ENCODE measurements at regions of chr12 and their contacts with region 1.

Region 1: GRCh38 chr12:50542448-50542847 is 37.7 kb downstream of the DIP2B start:
- DNase-seq: peak; percentile 99
- H3K4me3 ChIP-seq: no peak overlapping the region
- H3K27ac ChIP-seq: peak overlapping the region; percentile 98
- H3K4me1 ChIP-seq: peaks cover 38% of the 10 kb centered on the region
- H3K27me3 ChIP-seq: no peaks in the 10 kb centered on the region
- CTCF ChIP-seq: no peak

Region 2: DNA sequence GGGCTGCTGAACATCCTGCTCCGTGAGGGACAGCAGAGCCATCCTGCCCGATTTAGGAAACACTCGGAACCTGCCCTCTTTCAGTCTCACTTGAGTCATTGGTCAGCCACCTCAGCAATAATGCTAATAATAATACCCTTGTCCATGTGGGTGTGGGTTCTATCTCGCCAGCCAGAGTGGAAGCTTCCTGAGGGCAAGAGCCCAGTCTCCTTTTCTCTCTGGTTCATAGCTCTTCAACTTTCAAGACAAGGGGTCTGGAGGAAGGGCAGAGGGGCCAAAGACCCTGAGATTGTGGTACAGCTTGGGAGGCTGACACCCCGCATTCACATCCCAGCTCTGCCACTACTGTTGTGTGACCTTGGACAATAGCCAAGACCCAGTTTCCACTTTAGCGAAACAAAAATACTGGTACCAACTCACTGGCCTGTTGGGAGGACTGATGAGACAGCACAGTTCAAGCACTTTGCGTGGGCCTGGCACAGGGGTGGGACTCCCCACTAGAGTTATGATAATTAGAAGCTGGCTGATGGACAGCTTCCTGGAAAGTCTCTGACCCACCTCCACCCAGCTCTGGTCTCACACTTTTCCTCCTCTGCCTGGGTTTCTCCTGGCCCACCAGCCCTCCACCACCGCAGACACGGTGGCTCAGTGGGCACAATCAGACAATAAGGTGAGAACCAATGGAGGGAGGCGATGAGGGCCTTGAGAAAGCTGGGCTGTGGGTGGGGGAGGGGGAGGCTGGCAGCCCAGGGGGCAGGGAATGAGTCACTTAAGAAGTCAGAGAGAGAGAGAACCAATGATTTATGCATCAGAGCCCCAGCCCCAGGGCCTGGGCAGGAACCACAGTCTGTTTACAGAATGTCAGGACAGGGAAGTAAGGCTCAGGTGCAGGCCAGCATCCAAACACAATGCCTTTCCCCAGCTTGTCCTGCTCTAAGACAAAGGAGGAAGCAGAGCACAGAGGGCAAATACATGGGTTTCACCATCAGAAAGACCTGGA is 648.4 kb before region 1 on chr12:
- CTCF ChIA-PET with region 1: no interaction called
- dilution Hi-C with region 1: no loop called
- in situ Hi-C with region 1: no loop called
- intact Hi-C with region 1: no loop called
- DNase-seq: peak; percentile 35
- H3K4me3 ChIP-seq: no peak overlapping the region
- H3K27ac ChIP-seq: no peak overlapping the region
- H3K4me1 ChIP-seq: no peaks in the 10 kb centered on the region
- H3K27me3 ChIP-seq: no peaks in the 10 kb centered on the region
- CTCF ChIP-seq: no peak

Region 3: GRCh38 chr12:50482566-50482965 is 59.9 kb before region 1 on chr12:
- CTCF ChIA-PET with region 1: no interaction called
- dilution Hi-C with region 1: no loop called
- in situ Hi-C with region 1: no loop called
- intact Hi-C with region 1: no loop called
- DNase-seq: peak; percentile 22
- H3K4me3 ChIP-seq: no peak overlapping the region
- H3K27ac ChIP-seq: no peak overlapping the region
- H3K4me1 ChIP-seq: no peaks in the 10 kb centered on the region
- H3K27me3 ChIP-seq: no peaks in the 10 kb centered on the region
- CTCF ChIP-seq: no peak

Region 4: GRCh38 chr12:50589650-50590435 is 47.4 kb after region 1 on chr12:
- CTCF ChIA-PET with region 1: no interaction called
- dilution Hi-C with region 1: loop called (anchors 5 kb)
- in situ Hi-C with region 1: no loop called
- intact Hi-C with region 1: no loop called
- DNase-seq: peak; percentile 81
- H3K4me3 ChIP-seq: no peak overlapping the region
- H3K27ac ChIP-seq: peak overlapping the region; percentile 58
- H3K4me1 ChIP-seq: peaks cover 9% of the 10 kb centered on the region
- H3K27me3 ChIP-seq: no peaks in the 10 kb centered on the region
- CTCF ChIP-seq: no peak

Region 5: DNA sequence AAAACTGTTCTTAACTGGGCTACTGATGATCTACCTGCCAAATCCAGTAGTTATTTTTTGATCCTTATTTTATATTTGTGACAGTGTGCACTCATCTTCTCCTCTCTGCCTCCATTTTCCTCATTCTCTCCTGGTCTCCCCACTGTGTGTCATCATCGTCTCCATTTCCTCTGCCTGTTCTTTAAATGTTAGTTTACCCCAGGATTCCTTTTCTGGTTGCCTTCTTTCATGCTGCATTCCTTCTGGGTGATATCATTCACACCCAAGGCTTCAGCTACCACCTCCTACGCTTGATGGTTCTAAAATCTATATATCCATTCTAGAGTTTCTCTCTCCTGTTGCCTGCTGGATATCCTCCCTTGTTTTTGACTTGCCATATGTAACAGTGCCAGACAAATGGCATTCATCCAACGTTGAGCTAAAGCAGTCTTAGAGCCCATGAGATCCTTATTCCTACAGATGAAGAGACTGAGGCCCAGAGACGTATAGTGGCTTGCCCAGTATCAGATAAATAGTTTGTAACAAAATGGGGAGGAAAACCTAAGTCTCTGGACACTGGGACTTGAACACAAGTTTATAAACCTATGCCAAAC is 71.8 kb after region 1 on chr12:
- CTCF ChIA-PET with region 1: no interaction called
- dilution Hi-C with region 1: no loop called
- in situ Hi-C with region 1: no loop called
- intact Hi-C with region 1: loop called (anchors 2 kb)
- DNase-seq: peak; percentile 81
- H3K4me3 ChIP-seq: no peak overlapping the region
- H3K27ac ChIP-seq: peak overlapping the region; percentile 95
- H3K4me1 ChIP-seq: peaks cover 61% of the 10 kb centered on the region
- H3K27me3 ChIP-seq: no peaks in the 10 kb centered on the region
- CTCF ChIP-seq: no peak

Measured in mammary epithelial cell (primary cell).